ENCODE measurements at regions of chr10 and their contacts with region 1.

Region 1: GRCh38 chr10:95693668-95694534 is at the start of gene TCTN3:
- DNase-seq: peak; percentile 99 to 100
- H3K4me3 ChIP-seq: peak within 1 kb of the TSS; percentile 76 to 81
- H3K27ac ChIP-seq: peak within 1 kb of the TSS; percentile 77
- H3K4me1 ChIP-seq: peaks cover 18% of the 10 kb centered on the region
- H3K27me3 ChIP-seq: no peaks in the 10 kb centered on the region
- CTCF ChIP-seq: peak; percentile 89 to 100 (median 100)
- POLR2A ChIP-seq: peak in 1 of 2 donors; percentile 13
- total RNA-seq, gene TCTN3: 15.2 TPM

Region 2: DNA sequence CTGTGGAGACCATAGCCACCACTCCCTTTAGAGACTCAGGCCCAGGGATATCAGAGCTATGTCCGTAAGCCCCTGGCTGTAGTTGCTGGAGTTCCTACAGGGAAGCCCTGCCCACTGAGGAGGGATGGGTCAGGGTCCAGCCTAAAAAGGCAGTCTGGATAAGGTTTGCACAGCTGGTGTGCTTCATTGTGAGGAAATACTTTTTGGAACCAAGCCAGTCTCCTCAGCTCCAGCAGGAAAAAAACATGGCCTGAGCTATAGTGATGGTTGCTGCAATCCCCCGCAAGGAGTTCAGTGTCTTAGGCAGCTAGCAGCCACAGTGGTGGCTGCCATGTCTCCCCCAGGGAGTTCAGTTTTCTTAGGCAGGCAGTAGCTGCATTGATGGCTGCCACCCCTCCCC is 572.0 kb before region 1 on chr10:
- intact Hi-C with region 1: no loop called
- DNase-seq: no peak
- H3K4me3 ChIP-seq: no peak overlapping the region
- H3K27ac ChIP-seq: no peak overlapping the region
- H3K4me1 ChIP-seq: no peaks in the 10 kb centered on the region
- H3K27me3 ChIP-seq: no peaks in the 10 kb centered on the region
- CTCF ChIP-seq: no peak
- POLR2A ChIP-seq: no peak

Region 3: DNA sequence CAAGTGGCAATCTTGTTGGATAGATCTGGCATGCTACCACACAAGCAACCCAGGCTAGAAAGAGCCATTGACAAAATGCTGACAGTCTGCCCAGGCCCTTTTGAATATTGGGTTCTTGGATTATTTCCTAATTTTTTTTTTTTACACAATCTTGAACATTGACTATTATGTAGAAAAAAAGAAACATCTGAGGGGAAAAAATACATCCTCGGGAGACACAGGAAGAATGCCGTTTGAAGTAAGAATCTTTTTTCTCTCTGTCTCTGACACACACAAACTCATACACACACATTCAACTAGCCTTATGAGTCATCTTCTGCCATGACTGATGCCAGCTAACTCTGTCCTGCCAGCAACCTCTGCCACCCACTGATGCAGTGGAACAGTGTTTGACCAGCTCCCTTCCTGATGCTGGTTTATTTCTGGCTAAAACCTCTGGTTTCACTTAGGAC is 179.9 kb before region 1 on chr10:
- intact Hi-C with region 1: no loop called
- DNase-seq: no peak
- H3K4me3 ChIP-seq: no peak overlapping the region
- H3K27ac ChIP-seq: peak overlapping the region; percentile 26
- H3K4me1 ChIP-seq: peaks cover 44% of the 10 kb centered on the region
- H3K27me3 ChIP-seq: no peaks in the 10 kb centered on the region
- CTCF ChIP-seq: no peak
- POLR2A ChIP-seq: no peak

Region 4: GRCh38 chr10:95841661-95842498 is 148.0 kb after region 1 on chr10:
- intact Hi-C with region 1: loop called (anchors 5 kb)
- DNase-seq: no peak
- H3K4me3 ChIP-seq: no peak overlapping the region
- H3K27ac ChIP-seq: peak overlapping the region; percentile 47
- H3K4me1 ChIP-seq: peaks cover 48% of the 10 kb centered on the region
- H3K27me3 ChIP-seq: no peaks in the 10 kb centered on the region
- CTCF ChIP-seq: peak in 1 of 3 experiments; percentile 71
- POLR2A ChIP-seq: no peak